HEK293 (cell line): ENCODE measurements at regions of chr5 and their contacts with region 1.

Region 1: DNA sequence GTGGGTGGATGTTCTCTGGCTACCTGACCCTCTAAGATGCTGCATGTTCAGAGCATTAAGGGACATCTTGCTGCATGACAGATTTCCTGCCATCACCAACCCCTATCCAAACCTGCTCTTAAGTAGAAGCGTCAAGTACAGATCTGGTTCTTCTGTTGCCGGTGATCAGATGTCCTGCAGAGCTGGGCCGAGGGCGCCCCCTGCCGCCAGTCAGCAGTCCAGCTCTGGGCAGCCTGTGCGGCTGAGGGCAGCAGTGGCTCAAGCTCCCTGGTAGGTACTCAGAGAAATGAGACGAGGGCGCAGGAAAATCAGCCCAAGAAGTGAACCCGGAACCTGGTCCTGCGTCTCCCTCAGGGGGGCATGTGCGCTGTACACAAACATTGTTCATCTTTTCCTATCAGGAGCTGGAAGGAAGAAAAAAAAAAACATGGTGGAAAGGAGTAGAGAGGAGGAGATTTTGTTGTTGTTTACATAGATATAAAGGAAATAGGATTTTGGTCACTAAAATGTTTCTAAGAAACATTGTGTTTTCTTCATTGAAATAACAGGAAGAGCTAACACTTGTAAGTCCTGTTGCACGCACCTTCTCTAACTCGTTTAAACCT is 95.8 kb downstream of the CFAP90 start:
- H3K4me3 ChIP-seq: no peak overlapping the region
- H3K27ac ChIP-seq: no peak overlapping the region
- H3K4me1 ChIP-seq: peaks cover 5% of the 10 kb centered on the region; the same call in 1 of the 2 replicates
- CTCF ChIP-seq: peak; percentile 67; the same call in 1 of the 2 replicates

Region 2: GRCh38 chr5:6886866-6887265 is 868.2 kb before region 1 on chr5:
- CTCF ChIA-PET with region 1: no interaction called
- POLR2A ChIA-PET with region 1: no interaction called
- H3K4me3 ChIP-seq: no peak overlapping the region
- H3K27ac ChIP-seq: no peak overlapping the region
- H3K4me1 ChIP-seq: no peaks in the 10 kb centered on the region
- CTCF ChIP-seq: no peak

Region 3: DNA sequence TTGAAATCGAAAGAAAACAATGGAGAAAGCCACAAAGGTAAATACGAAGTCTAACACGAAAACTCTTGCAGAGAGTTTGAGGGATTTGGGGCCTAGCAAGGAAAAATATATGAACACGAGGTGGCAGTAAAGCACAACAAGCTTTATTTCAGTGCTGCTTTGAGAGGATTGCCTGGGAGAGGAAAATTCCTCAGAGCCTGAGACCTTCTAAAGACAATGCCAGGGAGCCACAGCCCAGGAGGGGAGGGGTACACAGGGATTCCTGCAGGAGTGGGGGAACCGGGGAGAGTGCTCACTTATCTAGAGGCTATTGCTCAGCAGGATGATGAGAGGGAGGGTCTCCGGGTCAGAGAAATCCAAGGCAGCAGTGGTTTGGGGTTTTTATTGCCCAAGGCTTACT is 494.0 kb before region 1 on chr5:
- CTCF ChIA-PET with region 1: interaction called, 10 read pairs
- POLR2A ChIA-PET with region 1: no interaction called
- H3K4me3 ChIP-seq: no peak overlapping the region
- H3K27ac ChIP-seq: no peak overlapping the region
- H3K4me1 ChIP-seq: no peaks in the 10 kb centered on the region
- CTCF ChIP-seq: peak; percentile 18; the same call in 1 of the 2 replicates

Region 4: GRCh38 chr5:7714119-7714518 is 41.0 kb before region 1 on chr5:
- CTCF ChIA-PET with region 1: interaction called, 11 read pairs
- POLR2A ChIA-PET with region 1: no interaction called
- H3K4me3 ChIP-seq: no peak overlapping the region
- H3K27ac ChIP-seq: no peak overlapping the region
- H3K4me1 ChIP-seq: no peaks in the 10 kb centered on the region
- CTCF ChIP-seq: no peak

Region 5: GRCh38 chr5:7823594-7823993 is 68.5 kb after region 1 on chr5:
- CTCF ChIA-PET with region 1: no interaction called
- POLR2A ChIA-PET with region 1: no interaction called
- H3K4me3 ChIP-seq: no peak overlapping the region
- H3K27ac ChIP-seq: no peak overlapping the region
- H3K4me1 ChIP-seq: no peaks in the 10 kb centered on the region
- CTCF ChIP-seq: no peak